Activated CD4-positive, alpha-beta T cell treated with anti-CD3 and anti-CD28 coated beads for 36 hours (primary cell): ENCODE measurements at regions of chr6 and their contacts with region 1.

Region 1: GRCh38 chr6:138109042-138109997 is 2.1 kb upstream of the PERP start:
- DNase-seq: peak; percentile 89
- ATAC-seq: peak; percentile 49
- H3K4me3 Mint-ChIP-seq: no peak overlapping the region
- H3K27ac Mint-ChIP-seq: no peak overlapping the region
- H3K4me1 Mint-ChIP-seq: peaks cover 14% of the 10 kb centered on the region
- H3K27me3 Mint-ChIP-seq: peaks cover 34% of the 10 kb centered on the region

Region 2: DNA sequence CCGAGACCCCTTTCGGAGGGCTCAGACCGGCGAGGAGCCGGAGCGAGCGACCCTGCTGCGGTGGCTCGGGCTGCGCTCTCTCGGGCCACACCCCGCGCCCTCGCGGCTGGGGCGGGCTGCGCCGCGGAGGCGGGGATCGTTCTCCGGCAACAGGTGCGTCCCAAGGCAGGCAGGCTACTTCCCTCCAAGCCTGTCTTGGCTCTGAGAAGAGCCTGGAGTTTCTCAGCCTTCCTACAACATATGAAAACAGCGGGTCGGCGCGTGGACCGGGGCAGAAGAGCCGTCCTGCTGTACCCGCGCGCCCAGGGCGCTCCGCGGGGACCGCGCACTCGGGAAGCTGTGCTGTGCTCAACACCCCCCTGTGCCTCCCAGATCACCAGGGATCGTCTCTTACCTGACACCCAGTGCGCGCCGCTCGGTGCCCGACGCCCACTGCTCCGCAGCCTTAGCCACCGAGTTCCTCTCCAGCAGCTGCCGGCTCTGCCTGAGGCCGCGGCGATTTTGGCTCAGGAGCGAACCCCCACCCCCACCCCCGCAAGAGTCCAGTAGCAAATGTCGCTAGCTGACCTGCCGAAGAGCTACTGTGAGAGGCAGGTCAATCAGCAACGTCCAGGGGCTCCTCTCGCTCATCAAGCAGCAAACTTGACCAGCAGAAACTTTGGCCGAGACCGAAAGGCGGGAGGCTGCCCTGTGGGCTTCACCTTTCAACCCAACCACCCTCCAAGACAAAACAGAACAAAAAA is 611.4 kb before region 1 on chr6:
- CTCF ChIA-PET with region 1: no interaction called
- POLR2A ChIA-PET with region 1: no interaction called
- intact Hi-C with region 1: loop called in 1 of 2 experiments (anchors 5 kb)
- DNase-seq: peak; percentile 33
- ATAC-seq: peak; percentile 11
- H3K4me3 Mint-ChIP-seq: peak overlapping the region; percentile 38
- H3K27ac Mint-ChIP-seq: no peak overlapping the region
- H3K4me1 Mint-ChIP-seq: peaks cover 42% of the 10 kb centered on the region
- H3K27me3 Mint-ChIP-seq: peaks cover 69% of the 10 kb centered on the region

Region 3: GRCh38 chr6:137661601-137662000 is 447.7 kb before region 1 on chr6:
- CTCF ChIA-PET with region 1: no interaction called
- POLR2A ChIA-PET with region 1: no interaction called
- intact Hi-C with region 1: loop called in 1 of 2 experiments (anchors 5 kb)
- DNase-seq: peak; percentile 64
- ATAC-seq: peak; percentile 37
- H3K4me3 Mint-ChIP-seq: no peak overlapping the region
- H3K27ac Mint-ChIP-seq: no peak overlapping the region
- H3K4me1 Mint-ChIP-seq: peaks cover 25% of the 10 kb centered on the region
- H3K27me3 Mint-ChIP-seq: peaks cover 9% of the 10 kb centered on the region

Region 4: GRCh38 chr6:138129190-138129589 is 19.9 kb after region 1 on chr6:
- CTCF ChIA-PET with region 1: no interaction called
- POLR2A ChIA-PET with region 1: no interaction called
- intact Hi-C with region 1: no loop called
- DNase-seq: no peak
- ATAC-seq: no peak
- H3K4me3 Mint-ChIP-seq: no peak overlapping the region
- H3K27ac Mint-ChIP-seq: no peak overlapping the region
- H3K4me1 Mint-ChIP-seq: no peaks in the 10 kb centered on the region
- H3K27me3 Mint-ChIP-seq: peaks cover 20% of the 10 kb centered on the region